Heart right ventricle (tissue), 16 donors: ENCODE measurements at regions of chr16 and their contacts with region 1.

Region 1: DNA sequence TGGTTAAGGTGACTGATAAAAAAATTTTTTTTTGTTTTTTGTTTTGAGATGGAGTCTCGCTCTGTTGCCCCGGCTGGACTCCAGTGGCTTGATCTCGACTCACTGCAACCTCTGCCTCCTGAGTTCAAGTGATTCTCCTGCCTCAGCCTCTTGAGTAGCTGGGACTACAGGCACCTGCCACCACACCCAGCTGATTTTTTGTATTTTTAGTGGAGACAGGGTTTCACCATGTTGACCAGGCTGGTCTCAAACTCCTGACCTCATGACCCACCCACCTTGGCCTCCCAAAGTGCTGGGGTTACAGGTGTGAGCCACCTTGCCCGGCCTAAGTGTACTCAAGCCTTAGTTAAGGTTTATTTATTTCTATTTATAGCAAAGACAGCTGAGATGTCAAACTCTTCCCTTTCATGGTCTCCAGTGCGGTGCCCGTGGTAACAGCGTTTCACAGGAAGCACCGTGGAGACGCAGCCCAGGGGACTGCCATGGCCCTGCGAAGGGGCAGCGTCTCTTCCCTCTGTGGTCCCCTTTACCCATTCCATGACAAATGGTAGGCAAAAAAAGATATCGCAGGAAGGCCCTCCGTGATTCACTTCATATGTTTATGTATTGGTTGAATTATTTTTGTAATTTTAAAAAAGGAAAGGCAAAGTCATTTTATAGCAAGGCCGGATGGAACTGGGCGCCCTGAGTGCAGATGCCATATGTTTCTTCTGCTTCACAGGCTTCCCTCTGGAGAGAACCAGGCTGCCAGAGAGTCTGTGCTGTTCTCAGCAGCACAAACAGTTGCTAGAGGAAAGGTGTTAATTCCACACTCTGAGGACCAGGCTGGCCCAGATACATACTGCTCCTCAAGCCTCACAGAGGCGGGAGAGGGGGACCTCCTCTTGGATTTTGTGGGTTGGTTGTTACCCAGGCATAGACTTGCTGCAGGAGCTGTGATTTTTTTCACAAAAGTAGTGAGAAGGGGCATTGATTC is 29.2 kb downstream of the DDX19A start:
- DNase-seq: no peak
- ATAC-seq: no peak
- H3K4me3 ChIP-seq: no peak overlapping the region
- H3K27ac ChIP-seq: no peak overlapping the region
- H3K4me1 ChIP-seq: peaks cover 0 to 18% (median 17%) of the 10 kb centered on the region in 9 donors
- H3K27me3 ChIP-seq: no peaks in the 10 kb centered on the region
- CTCF ChIP-seq: no peak

Region 2: GRCh38 chr16:70396246-70396904 is 20.5 kb after region 1 on chr16:
- intact Hi-C with region 1: no loop called
- DNase-seq: no peak
- ATAC-seq: peak in 4 of 8 donors; percentile 41 to 65 (median 54)
- H3K4me3 ChIP-seq: no peak overlapping the region
- H3K27ac ChIP-seq: no peak overlapping the region
- H3K4me1 ChIP-seq: peaks cover 4 to 20% (median 17%) of the 10 kb centered on the region in 9 donors
- H3K27me3 ChIP-seq: no peaks in the 10 kb centered on the region
- CTCF ChIP-seq: no peak

Region 3: GRCh38 chr16:70416748-70417616 is 41.1 kb after region 1 on chr16:
- intact Hi-C with region 1: no loop called
- DNase-seq: no peak
- ATAC-seq: peak in 3 of 8 donors; percentile 5 to 19 (median 9)
- H3K4me3 ChIP-seq: no peak overlapping the region
- H3K27ac ChIP-seq: peak overlapping the region in 1 of 10 donors; percentile 22
- H3K4me1 ChIP-seq: peaks cover 6 to 76% (median 51%) of the 10 kb centered on the region in 9 donors
- H3K27me3 ChIP-seq: no peaks in the 10 kb centered on the region
- CTCF ChIP-seq: no peak

Region 4: DNA sequence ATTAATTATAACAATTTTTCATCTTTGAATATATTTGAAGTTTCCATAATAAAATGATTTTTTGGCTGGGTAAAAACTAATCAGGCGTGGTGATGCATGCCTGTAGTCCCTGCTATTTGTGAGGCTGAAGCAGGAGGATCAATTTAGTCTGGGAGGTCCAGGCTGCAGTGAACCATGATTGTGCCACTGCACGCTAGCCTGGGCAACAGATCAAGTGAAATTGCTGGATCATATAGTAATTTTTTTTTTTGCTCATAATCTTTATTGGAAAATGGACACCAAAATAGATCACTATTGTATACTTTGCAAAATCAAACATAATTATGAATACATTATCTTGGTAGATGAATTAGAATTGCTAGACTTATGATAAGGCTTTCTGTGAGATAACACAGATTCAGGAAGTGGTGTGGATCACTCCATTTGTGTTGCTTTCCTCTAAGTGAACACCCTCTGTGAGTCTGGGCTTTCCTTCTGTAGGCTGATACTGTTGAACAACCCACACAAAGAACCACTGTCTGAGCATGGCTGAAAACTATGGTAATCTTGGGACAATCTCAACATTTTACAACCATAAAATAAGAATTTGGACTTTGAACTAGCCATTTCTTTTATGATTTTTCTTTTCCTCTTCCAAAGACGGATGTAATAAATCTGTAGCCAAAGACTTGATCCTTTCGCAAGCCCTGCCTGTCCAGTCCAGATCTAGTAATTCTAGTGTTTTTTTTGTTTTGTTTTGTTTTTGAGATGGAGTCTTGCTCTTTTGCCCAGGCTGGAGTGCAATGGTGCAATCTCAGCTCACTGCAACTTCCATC is 68.5 kb after region 1 on chr16:
- intact Hi-C with region 1: loop called in 5 of 10 experiments (anchors 1 to 5 kb)
- DNase-seq: no peak
- ATAC-seq: no peak
- H3K4me3 ChIP-seq: no peak overlapping the region
- H3K27ac ChIP-seq: no peak overlapping the region
- H3K4me1 ChIP-seq: peaks cover 0 to 6% (median 4%) of the 10 kb centered on the region in 9 donors
- H3K27me3 ChIP-seq: no peaks in the 10 kb centered on the region
- CTCF ChIP-seq: no peak

Region 5: DNA sequence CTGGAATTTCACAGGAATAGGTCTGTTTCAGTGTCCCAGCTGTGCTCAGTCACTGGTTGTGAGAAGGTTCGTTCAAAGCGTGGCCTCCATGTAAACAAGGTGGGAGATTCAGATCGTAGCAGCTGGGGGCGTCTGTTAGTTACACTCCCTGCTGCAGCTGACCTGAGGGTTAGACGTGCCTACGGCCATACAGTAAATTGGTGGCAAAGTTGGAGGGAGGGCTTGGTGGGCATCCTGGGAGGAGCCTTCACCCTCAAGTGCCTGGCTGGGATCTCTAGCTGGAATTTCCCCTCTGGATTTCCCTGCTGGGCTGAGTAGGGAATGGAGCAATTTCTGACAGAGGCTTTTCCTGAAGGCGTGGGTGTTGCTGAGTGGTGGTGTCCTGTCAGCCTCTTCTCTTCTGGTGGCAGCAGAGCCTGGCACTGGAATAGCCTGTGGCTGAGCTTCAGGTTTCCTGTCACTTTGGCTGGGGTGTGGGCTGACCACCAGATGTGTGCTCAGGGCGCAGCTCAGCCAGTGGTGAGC is 84.9 kb after region 1 on chr16:
- intact Hi-C with region 1: loop called in 1 of 10 experiments (anchors 10 kb)
- DNase-seq: no peak
- ATAC-seq: peak in 7 of 8 donors; percentile 49 to 90 (median 77)
- H3K4me3 ChIP-seq: no peak overlapping the region
- H3K27ac ChIP-seq: peak overlapping the region in 2 of 10 donors; percentile 13 to 36
- H3K4me1 ChIP-seq: peaks cover 0 to 20% (median 11%) of the 10 kb centered on the region in 9 donors
- H3K27me3 ChIP-seq: no peaks in the 10 kb centered on the region
- CTCF ChIP-seq: peak in 1 of 9 donors; percentile 10

Region 6: GRCh38 chr16:70478912-70479341 is 103.0 kb after region 1 on chr16:
- intact Hi-C with region 1: loop called in 1 of 10 experiments (anchors 5 kb)
- DNase-seq: peak in 1 of 2 donors; percentile 31
- ATAC-seq: peak; percentile 5 to 67 (median 50)
- H3K4me3 ChIP-seq: no peak overlapping the region
- H3K27ac ChIP-seq: peak overlapping the region in 9 of 10 donors; percentile 31 to 79 (median 66)
- H3K4me1 ChIP-seq: peaks cover 0 to 36% (median 33%) of the 10 kb centered on the region in 9 donors
- H3K27me3 ChIP-seq: no peaks in the 10 kb centered on the region
- CTCF ChIP-seq: no peak

Region 7: DNA sequence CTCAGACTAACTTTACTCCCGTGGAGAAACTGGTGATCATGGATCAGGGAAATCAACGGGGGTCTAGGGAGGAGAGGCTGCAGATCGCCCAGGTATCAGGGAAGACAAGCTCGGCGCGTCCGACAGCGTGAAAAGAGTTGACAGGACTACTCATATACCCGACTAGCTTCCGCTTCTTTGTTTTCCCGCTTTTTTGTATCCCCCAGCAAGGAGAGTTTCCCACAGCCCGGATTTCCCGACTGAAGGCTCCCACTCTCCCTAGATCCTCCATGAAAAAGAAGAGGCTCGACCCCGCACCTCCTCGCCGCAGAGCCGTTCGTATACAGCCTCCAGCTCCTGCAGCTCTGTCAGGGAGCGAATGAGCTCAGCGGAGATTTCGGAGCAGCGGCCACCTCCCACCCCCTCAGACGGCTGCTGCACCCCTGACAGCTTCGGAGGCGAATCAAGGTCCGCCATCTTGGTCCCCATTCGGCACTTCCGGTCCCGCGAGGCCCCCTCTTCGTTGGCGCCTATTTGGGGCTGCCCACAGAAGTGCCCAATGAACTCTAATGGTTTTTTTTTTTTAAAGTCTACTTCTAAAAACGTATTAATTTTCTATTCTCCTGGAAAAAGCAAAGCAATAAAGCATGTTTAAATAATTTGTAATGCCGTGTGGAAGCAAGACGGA is 147.3 kb after region 1 on chr16 and contains the start of gene COG4:
- intact Hi-C with region 1: loop called in 4 of 10 experiments (anchors 5 to 10 kb)
- DNase-seq: peak; percentile 87 to 91
- ATAC-seq: peak; percentile 91 to 96 (median 94)
- H3K4me3 ChIP-seq: peak within 1 kb of the TSS; percentile 66 to 98 (median 83)
- H3K27ac ChIP-seq: peak within 1 kb of the TSS; percentile 77 to 94 (median 88)
- H3K4me1 ChIP-seq: peaks cover 7 to 56% (median 43%) of the 10 kb centered on the region in 9 donors
- H3K27me3 ChIP-seq: no peaks in the 10 kb centered on the region
- CTCF ChIP-seq: no peak
- total RNA-seq, gene COG4: 33.3 to 56.8 (median 40.7) TPM

Region 8: GRCh38 chr16:70770626-70771552 is 395.0 kb after region 1 on chr16:
- intact Hi-C with region 1: no loop called
- DNase-seq: peak; percentile 47 to 49
- ATAC-seq: peak in 7 of 8 donors; percentile 61 to 79 (median 76)
- H3K4me3 ChIP-seq: no peak overlapping the region
- H3K27ac ChIP-seq: no peak overlapping the region
- H3K4me1 ChIP-seq: peaks cover 0 to 6% (median 5%) of the 10 kb centered on the region in 9 donors
- H3K27me3 ChIP-seq: no peaks in the 10 kb centered on the region
- CTCF ChIP-seq: peak; percentile 89 to 99 (median 96)